Posterior vena cava (tissue), 2 donors: ENCODE measurements at regions of chr22 and their contacts with region 1.

Region 1: DNA sequence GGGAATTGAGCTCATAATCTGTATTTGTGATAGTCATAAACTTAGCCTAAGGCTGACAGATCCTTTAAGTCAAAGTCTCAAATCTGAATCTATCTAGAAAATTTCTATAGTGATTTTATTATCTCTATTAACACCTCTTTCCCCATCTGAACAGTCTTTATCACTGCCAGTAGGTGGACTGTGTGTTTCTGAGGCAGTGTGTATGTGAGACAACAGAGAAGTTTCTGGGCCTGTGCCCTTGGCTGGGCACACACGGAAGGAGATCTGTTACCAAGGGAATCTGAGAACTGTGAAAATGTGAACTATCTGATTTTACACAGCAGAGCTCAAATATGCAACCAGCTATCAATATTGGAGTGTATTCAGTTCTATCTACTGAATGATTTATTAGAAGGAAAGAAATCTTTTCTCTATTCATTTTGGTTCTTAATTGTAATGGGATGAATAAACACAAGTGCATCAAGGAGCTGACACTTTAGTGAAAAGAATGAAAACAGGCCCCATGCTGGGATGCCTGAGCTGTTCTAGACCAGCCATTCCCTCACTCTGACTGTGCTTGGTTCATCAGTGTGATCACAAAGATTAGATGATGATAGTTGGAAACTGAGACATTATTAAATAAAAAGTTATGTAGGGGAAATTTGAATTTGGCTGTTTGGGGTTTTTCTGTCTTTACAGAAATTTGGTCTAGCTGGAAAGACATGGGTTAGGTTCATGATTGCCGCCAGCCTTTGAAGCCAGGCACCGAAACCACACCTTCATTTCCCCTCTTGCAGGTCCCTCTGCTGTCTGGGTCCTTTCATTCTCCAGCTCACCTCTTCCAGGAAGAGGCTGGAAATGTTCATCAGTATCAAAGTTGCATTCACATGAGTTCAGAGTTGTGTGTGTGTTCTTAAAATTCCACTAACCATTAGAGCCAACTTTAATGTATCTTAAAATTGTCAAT is 68.1 kb downstream of the LIF start:
- DNase-seq: no peak

Region 2: GRCh38 chr22:29469755-29470154 is 708.7 kb before region 1 on chr22:
- intact Hi-C with region 1: loop called in 1 of 2 experiments (anchors 5 kb)
- DNase-seq: no peak